Transverse colon (tissue), 4 donors: ENCODE measurements at regions of chr11 and their contacts with region 1.

Region 1: GRCh38 chr11:36672813-36673450 is 74.9 kb upstream of the RAG2 start:
- DNase-seq: no peak
- H3K4me3 ChIP-seq: no peak overlapping the region
- H3K27ac ChIP-seq: no peak overlapping the region
- H3K4me1 ChIP-seq: no peaks in the 10 kb centered on the region
- H3K27me3 ChIP-seq: no peaks in the 10 kb centered on the region
- CTCF ChIP-seq: peak; percentile 64 to 88 (median 86)
- EP300 ChIP-seq: no peak
- POLR2A ChIP-seq: no peak

Region 2: GRCh38 chr11:36564376-36565030 is 108.4 kb before region 1 on chr11:
- in situ Hi-C with region 1: loop called in 2 of 4 experiments (anchors 10 kb)
- intact Hi-C with region 1: loop called (anchors 1 kb)
- DNase-seq: peak; percentile 47
- H3K4me3 ChIP-seq: peak overlapping the region; percentile 5 to 45 (median 22)
- H3K27ac ChIP-seq: no peak overlapping the region
- H3K4me1 ChIP-seq: peaks cover 0 to 5% (median 3%) of the 10 kb centered on the region in 4 donors
- H3K27me3 ChIP-seq: no peaks in the 10 kb centered on the region
- CTCF ChIP-seq: peak; percentile 55 to 66 (median 63)
- EP300 ChIP-seq: no peak
- POLR2A ChIP-seq: no peak

Region 3: DNA sequence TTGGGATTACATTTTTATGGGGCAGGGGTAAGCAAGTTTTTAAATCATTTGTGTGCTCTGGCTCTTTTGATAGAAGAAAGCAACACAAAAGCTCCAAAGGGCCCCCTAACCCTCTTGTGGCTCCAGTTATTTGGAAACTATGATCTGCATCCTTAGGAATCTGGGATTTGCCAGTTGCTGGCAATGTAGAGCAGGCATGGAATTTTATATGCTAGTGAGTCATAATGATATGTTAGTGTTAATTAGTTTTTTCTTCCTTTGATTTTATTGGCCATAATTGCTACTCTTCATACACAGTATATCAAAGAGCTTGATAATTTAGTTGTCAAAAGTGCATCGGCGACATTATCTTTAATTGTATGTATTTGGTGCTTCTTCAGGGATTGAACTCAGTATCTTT is 95.1 kb before region 1 on chr11:
- in situ Hi-C with region 1: loop called in 1 of 4 experiments (anchors 10 kb)
- intact Hi-C with region 1: no loop called
- DNase-seq: no peak
- H3K4me3 ChIP-seq: no peak overlapping the region
- H3K27ac ChIP-seq: peak overlapping the region in 2 of 4 donors; percentile 22 to 26
- H3K4me1 ChIP-seq: no peaks in the 10 kb centered on the region
- H3K27me3 ChIP-seq: no peaks in the 10 kb centered on the region
- CTCF ChIP-seq: no peak
- EP300 ChIP-seq: no peak
- POLR2A ChIP-seq: no peak

Region 4: DNA sequence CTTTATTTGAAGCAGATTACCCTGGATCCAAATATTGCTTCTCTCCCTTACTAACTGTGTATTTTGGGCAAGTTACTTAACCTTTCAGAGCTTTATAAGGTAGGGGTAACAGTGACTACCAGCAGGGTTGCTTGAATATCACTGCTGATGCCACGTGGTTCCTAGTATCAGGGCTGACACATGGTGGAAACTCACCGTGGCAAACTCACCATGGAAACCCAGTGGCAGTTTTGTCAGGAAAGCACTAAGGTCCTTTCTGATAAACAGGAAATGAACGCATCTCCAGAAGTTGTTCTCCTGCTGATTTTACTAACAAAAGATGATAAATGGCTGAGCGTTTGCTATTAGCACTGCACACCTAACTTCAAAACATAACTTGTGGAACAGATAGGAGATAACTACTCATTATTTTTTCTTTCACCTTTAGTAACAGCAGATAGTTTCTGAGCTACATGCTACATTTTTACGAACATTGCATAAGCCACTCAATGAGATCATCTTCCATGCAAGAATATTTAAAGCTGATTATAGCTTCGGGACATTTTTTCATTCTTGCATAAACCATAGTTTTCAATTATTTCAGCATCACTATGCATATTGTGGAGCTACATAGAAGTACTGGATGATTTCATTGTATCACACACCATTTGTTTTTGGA is 15.2 kb before region 1 on chr11:
- in situ Hi-C with region 1: no loop called
- intact Hi-C with region 1: loop called (anchors 2 kb)
- DNase-seq: no peak
- H3K4me3 ChIP-seq: no peak overlapping the region
- H3K27ac ChIP-seq: no peak overlapping the region
- H3K4me1 ChIP-seq: no peaks in the 10 kb centered on the region
- H3K27me3 ChIP-seq: no peaks in the 10 kb centered on the region
- CTCF ChIP-seq: no peak
- EP300 ChIP-seq: no peak
- POLR2A ChIP-seq: no peak